ENCODE measurements at regions of chr7 and their contacts with region 1.

Region 1: GRCh38 chr7:74199551-74200242 is 10.1 kb upstream of the LAT2 start:
- DNase-seq: no peak
- H3K27ac ChIP-seq: peak overlapping the region; percentile 52
- CTCF ChIP-seq: no peak

Region 2: GRCh38 chr7:74043523-74043951 is 156.2 kb before region 1 on chr7:
- CTCF ChIA-PET with region 1: no interaction called
- POLR2A ChIA-PET with region 1: no interaction called
- DNase-seq: no peak
- H3K27ac ChIP-seq: peak overlapping the region; percentile 40
- CTCF ChIP-seq: no peak

Region 3: GRCh38 chr7:74371381-74372341 is 172.0 kb after region 1 on chr7:
- CTCF ChIA-PET with region 1: interaction called, 3 read pairs
- POLR2A ChIA-PET with region 1: interaction called, 14 read pairs
- DNase-seq: peak; percentile 32
- H3K27ac ChIP-seq: peak overlapping the region; percentile 12; the same call in 1 of the 2 replicates
- CTCF ChIP-seq: no peak

Measured in RWPE1 (cell line).